ENCODE measurements at regions of chr13 and their contacts with region 1.

Region 1: DNA sequence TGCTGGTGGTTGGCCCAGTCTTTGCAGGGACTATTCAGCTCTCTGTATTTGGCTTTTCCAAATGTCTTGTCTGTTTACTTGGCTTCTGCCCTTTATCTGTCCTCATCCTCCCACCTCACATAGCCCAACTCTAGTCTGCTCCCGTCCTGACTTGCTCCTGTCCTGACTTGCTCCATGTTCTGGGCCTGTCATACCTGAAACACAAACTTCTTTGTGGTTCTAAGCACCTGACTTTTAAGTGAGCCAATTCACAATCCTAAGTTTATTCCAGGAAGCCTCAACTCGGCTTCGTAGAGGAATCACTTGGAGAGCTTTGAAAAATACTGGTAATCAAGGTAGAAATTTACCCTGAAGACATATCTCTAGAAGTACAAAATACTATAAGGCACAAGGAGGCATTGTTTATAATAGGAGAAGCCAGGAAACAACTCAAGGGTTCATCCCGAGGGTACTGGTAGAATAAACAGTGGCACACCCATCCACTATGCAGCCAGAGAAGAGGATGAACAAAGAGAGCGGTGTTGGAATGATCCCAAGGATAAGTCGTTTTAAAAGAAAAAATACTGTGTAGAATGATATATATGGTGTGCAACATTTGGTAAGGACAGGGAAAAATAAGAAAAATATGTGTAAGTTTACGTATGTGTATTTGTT is 284.5 kb downstream of the FGF14 start:
- DNase-seq: no peak
- ATAC-seq: no peak
- H3K4me3 ChIP-seq: no peak overlapping the region
- H3K27ac ChIP-seq: no peak overlapping the region
- H3K4me1 ChIP-seq: no peaks in the 10 kb centered on the region
- H3K27me3 ChIP-seq: no peaks in the 10 kb centered on the region
- CTCF ChIP-seq: no peak

Region 2: GRCh38 chr13:100476963-100477362 is 1640.3 kb before region 1 on chr13:
- intact Hi-C with region 1: loop called in 1 of 10 experiments (anchors 5 kb)
- DNase-seq: no peak
- ATAC-seq: no peak
- H3K4me3 ChIP-seq: no peak overlapping the region
- H3K27ac ChIP-seq: no peak overlapping the region
- H3K4me1 ChIP-seq: peaks cover 0 to 4% (median 0%) of the 10 kb centered on the region in 9 donors
- H3K27me3 ChIP-seq: no peaks in the 10 kb centered on the region
- CTCF ChIP-seq: no peak

Region 3: GRCh38 chr13:101512650-101513049 is 604.7 kb before region 1 on chr13:
- intact Hi-C with region 1: no loop called
- DNase-seq: no peak
- ATAC-seq: no peak
- H3K4me3 ChIP-seq: no peak overlapping the region
- H3K27ac ChIP-seq: no peak overlapping the region
- H3K4me1 ChIP-seq: no peaks in the 10 kb centered on the region
- H3K27me3 ChIP-seq: no peaks in the 10 kb centered on the region
- CTCF ChIP-seq: no peak

Region 4: DNA sequence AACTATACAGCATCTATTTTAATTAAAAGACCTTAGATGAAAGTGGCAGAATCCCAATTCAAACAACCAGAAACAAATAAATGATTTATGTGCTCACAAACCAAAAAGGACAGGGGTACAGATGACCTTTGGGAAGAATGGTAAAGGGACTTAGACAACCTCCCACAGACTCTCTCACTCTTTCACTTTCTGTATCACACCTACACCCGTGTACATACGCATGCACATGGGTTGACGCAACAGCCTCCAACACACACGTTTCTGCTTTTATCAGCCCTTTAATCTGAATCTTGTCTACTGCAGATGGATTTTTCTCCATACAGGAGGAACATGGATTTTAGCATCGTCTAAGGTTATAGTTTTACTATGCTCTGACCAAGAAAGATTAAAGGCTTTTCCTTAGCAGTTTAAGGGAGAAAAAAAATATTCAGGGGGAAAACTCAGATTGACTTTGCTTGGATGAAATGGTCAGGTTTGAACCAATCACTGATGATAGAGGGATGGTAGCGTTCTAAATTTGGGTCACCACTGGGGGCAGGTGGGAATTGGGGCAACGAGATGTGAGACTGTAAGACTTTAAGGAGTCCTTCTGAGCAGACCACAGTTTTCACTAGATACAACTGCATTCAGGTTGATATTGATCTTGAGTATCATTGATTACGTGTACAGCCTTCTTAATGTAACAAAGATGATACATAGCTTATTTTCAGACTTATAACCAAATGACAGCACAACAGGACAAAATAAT is 498.7 kb before region 1 on chr13:
- intact Hi-C with region 1: no loop called
- DNase-seq: no peak
- ATAC-seq: no peak
- H3K4me3 ChIP-seq: no peak overlapping the region
- H3K27ac ChIP-seq: no peak overlapping the region
- H3K4me1 ChIP-seq: peaks cover 0 to 4% (median 0%) of the 10 kb centered on the region in 9 donors
- H3K27me3 ChIP-seq: no peaks in the 10 kb centered on the region
- CTCF ChIP-seq: no peak

Region 5: DNA sequence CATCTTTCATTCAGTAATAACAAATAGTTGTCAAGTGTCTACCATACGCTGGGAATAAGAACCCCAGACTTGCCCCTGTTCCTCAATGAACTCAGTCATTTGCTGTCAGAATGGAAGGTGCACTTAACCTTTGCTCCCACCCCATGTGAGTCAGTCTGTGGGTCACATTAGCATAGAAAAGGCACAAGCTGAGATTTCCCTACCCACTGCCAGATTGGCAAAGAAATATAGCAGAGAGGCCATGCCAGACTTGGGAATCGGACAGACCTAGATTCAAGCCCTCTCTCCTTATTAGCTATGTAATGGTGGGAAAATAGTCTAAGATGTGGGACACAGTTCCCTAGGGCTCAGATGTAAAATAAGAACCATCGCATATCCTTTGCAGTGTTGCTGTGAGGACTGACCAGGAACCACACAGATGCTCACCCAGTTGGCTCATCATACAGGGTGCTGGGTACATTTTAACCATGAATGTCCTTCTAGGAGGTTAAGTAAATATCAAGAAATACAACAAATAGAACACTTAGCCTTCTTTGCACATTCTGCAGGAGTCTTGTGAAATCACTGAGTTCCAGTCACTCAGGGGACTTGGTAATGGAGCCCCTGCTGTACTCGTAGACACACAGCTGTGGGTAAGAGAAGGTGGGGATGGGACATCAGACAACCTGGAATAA is 66.3 kb after region 1 on chr13:
- intact Hi-C with region 1: no loop called
- DNase-seq: no peak
- ATAC-seq: no peak
- H3K4me3 ChIP-seq: no peak overlapping the region
- H3K27ac ChIP-seq: no peak overlapping the region
- H3K4me1 ChIP-seq: no peaks in the 10 kb centered on the region
- H3K27me3 ChIP-seq: no peaks in the 10 kb centered on the region
- CTCF ChIP-seq: no peak

Measured in heart right ventricle (tissue), 16 donors.